A549 (cell line): ENCODE measurements at regions of chr17 and their contacts with region 1.

Region 1: DNA sequence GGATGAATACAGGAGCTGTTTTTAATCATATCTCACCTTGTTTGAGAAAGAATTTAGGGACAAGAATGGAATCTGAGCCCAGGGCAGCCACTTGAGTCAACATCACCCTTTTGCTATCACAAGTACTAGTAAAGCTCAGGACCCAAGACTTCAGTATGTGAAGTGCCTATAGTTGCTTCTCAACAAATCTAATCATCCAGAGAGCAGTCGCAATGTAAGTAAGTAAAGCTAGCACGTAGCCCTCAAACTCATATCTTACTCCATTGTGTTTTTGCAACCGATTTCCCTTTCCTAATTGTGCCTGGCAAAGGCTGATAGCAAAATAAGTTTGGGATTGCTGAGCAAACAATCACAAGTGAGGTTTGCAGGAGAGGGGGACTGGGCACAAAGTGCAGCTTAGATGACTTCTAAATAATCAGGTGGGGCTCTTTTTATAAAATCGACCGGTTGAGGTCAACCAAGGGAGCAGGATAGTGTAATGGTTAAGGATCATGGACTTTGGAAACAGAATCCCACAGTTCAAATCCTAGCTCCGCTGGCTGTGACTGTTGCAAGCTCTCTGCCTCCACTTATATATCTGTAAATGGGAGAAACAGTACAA is 13.0 kb downstream of the TOB1 start:
- DNase-seq: no peak
- ATAC-seq: no peak
- H3K4me3 ChIP-seq: no peak overlapping the region
- H3K27ac ChIP-seq: peak overlapping the region in 1 of 2 experiments; percentile 80; a peak in 2 of 6 replicates
- H3K4me1 ChIP-seq: peaks cover 25% of the 10 kb centered on the region
- CTCF ChIP-seq: no peak
- EP300 ChIP-seq: no peak
- POLR2A ChIP-seq: no peak
- RAD21 ChIP-seq: no peak

Region 2: DNA sequence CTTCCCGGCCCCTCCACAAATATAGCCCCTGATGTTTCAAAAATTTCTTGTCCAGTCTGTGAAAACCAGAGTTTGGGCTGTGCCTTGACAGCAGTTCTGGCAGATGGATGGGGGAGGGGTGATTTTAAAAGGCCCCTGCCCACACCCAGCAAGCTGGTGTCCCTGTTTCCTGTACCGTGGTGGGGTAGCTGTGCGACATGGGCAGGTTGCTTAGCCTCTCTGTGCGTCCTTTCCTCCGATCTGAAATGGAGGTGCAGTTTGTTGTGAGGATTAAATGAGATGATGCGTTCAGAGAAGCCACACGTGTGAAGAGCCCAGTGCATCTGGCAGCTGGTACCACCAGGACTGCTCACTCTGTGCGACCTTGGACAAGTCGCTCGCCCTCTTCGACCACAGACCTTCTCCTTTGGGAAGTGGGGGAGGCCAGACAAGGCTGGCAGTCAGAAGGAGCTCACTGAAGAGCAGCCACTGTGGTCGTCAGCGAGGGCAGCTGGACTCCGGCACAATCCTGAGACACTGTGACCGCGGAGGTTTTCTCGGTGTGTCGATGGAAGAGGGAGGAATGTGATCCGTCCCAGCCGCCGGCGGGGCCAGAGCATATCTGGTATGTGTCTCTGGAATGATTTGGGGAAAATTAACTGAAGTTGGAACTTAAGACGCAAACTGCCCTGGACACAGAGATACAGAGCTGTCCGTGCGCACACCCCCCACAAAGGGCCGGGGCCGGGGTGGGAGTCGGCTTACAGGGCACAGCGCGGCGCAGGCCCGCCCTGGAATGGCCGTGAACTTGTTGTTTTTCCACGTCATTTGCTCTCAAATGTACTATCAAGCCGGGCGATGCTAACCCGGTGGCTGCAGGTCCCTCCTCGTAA is 18.4 kb before region 1 on chr17:
- CTCF ChIA-PET with region 1: interaction called, 118 read pairs
- POLR2A ChIA-PET with region 1: no interaction called
- DNase-seq: no peak
- ATAC-seq: no peak
- H3K4me3 ChIP-seq: no peak overlapping the region
- H3K27ac ChIP-seq: no peak overlapping the region
- H3K4me1 ChIP-seq: no peaks in the 10 kb centered on the region
- CTCF ChIP-seq: no peak
- EP300 ChIP-seq: no peak
- POLR2A ChIP-seq: no peak
- RAD21 ChIP-seq: no peak

Region 3: DNA sequence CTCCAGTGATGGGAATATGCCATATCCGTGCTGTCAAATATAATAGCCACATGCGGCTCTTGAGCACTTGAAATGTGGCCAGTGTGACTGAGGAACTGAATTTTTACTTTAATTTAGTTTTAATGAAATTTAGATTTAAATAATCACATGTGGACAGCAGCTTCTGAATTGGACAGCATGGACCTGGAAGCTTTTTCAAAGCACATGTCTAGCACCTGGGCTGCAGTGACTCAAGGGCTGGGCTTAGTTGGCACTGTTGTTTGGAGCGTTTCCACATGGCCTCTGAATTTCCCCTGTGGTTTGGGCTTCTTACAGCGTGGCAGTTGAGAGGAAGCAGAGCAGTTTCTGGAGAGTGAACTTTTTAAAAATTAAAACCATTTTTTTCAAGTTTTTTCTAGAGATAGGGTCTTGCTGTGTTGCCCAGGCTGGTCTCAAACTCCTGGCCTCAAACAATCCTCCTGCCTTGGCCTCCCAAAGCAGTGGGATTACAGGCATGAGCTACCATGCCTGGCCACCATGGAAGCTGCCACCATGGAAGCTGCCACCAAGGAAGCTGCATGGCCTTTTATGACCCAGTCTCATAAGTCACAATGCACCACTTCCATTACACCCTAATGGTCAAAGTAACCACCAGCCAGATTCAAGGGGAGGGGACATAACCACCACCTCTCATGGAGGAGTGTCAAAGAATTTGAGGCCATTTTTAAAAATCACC is 19.8 kb after region 1 on chr17:
- CTCF ChIA-PET with region 1: interaction called, 197 read pairs
- POLR2A ChIA-PET with region 1: interaction called, 58 read pairs
- DNase-seq: no peak
- ATAC-seq: no peak; a peak in 1 of 6 replicates
- H3K4me3 ChIP-seq: no peak overlapping the region
- H3K27ac ChIP-seq: peak overlapping the region in 1 of 2 experiments; percentile 19; a peak in 2 of 6 replicates
- H3K4me1 ChIP-seq: peaks cover 15% of the 10 kb centered on the region
- CTCF ChIP-seq: no peak
- EP300 ChIP-seq: no peak
- POLR2A ChIP-seq: no peak
- RAD21 ChIP-seq: no peak

Region 4: GRCh38 chr17:50919321-50920085 is 66.4 kb after region 1 on chr17:
- CTCF ChIA-PET with region 1: interaction called, 25 read pairs
- POLR2A ChIA-PET with region 1: no interaction called
- DNase-seq: peak; percentile 96 to 99
- ATAC-seq: peak; percentile 92 to 93
- H3K4me3 ChIP-seq: no peak overlapping the region
- H3K27ac ChIP-seq: peak overlapping the region; percentile 87 to 92
- H3K4me1 ChIP-seq: peaks cover 79% of the 10 kb centered on the region
- CTCF ChIP-seq: no peak
- EP300 ChIP-seq: no peak
- POLR2A ChIP-seq: peak; percentile 25; the same call in 1 of the 2 replicates
- RAD21 ChIP-seq: peak; percentile 8 to 31; a peak in 1 of 5 replicates

Region 5: DNA sequence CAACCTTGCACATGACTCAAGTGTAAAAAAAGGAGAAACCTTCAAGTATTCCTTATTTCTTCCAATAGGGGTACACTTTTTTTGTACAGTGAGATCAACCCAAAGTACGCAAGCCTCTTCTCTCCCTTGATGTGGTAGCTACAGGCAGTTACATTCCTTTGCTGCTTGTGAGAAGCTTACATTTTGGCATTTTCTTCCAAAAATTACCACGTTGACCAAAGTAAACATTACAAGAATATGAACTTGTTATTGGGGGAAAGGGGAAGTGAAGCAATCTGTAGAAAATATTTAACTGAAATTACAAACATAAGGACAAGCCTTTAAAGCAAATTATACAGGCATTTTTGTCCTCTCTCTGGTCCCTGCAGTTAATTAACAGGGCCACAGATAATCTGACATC is 110.0 kb after region 1 on chr17:
- CTCF ChIA-PET with region 1: interaction called, 1,502 read pairs
- POLR2A ChIA-PET with region 1: no interaction called
- DNase-seq: no peak
- ATAC-seq: no peak
- H3K4me3 ChIP-seq: no peak overlapping the region
- H3K27ac ChIP-seq: no peak overlapping the region
- H3K4me1 ChIP-seq: 0 out of 3 replicates have a peak, but pooled peaks cover 6% of the 10 kb centered on the region
- CTCF ChIP-seq: no peak
- EP300 ChIP-seq: no peak
- POLR2A ChIP-seq: no peak
- RAD21 ChIP-seq: no peak

Region 6: GRCh38 chr17:51000835-51001638 is 147.9 kb after region 1 on chr17:
- CTCF ChIA-PET with region 1: interaction called, 15 read pairs
- POLR2A ChIA-PET with region 1: no interaction called
- DNase-seq: peak; percentile 62 to 78
- ATAC-seq: peak; percentile 86 to 91; a peak in 5 of 6 replicates
- H3K4me3 ChIP-seq: no peak overlapping the region
- H3K27ac ChIP-seq: no peak overlapping the region
- H3K4me1 ChIP-seq: no peaks in the 10 kb centered on the region
- CTCF ChIP-seq: peak; percentile 84
- EP300 ChIP-seq: no peak
- POLR2A ChIP-seq: no peak
- RAD21 ChIP-seq: peak; percentile 86 to 89